Breast epithelium (tissue), 4 donors: ENCODE measurements at regions of chr3 and their contacts with region 1.

Region 1: DNA sequence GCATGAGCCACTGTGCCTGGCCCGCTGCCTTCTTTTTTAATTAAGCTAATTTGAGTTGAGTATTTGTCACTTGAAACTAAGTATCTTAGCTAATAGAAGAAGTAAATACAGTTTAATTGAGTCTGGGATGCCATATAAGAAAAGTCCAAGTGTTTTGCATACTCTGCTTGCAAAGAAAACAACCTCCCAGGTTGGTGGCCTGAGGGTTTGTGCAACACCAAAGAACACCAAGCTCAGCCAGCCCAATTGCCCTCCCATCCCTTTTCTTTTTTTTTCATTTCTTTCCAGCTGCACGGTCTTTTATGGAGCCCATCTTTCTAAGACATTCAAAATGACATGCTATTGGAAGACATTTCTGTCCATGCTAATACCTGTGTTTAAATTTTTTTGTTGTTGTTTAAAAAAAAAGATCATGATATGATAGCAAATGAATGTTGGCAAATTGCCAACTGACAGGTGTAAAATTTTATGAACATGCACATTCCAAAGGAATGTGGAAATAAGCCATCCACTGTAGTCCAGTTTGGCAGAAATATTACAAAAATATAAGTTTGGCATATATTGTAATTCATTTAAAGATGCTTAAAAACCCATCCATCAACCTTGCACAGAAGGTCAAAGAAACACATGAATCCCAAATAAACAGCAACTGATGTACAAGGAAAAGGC is 75.5 kb upstream of the WNT5A start:
- DNase-seq: no peak
- H3K4me3 ChIP-seq: no peak overlapping the region
- H3K27ac ChIP-seq: no peak overlapping the region
- H3K4me1 ChIP-seq: no peaks in the 10 kb centered on the region
- H3K27me3 ChIP-seq: no peaks in the 10 kb centered on the region
- CTCF ChIP-seq: no peak
- POLR2A ChIP-seq: no peak

Region 2: GRCh38 chr3:55487381-55488241 is 75.0 kb before region 1 on chr3:
- intact Hi-C with region 1: loop called (anchors 2 kb)
- DNase-seq: peak in 1 of 2 donors; percentile 49
- H3K4me3 ChIP-seq: peak overlapping the region; percentile 51 to 91 (median 81)
- H3K27ac ChIP-seq: peak overlapping the region; percentile 83 to 84
- H3K4me1 ChIP-seq: no peaks in the 10 kb centered on the region
- H3K27me3 ChIP-seq: no peaks in the 10 kb centered on the region
- CTCF ChIP-seq: no peak
- POLR2A ChIP-seq: no peak

Region 3: DNA sequence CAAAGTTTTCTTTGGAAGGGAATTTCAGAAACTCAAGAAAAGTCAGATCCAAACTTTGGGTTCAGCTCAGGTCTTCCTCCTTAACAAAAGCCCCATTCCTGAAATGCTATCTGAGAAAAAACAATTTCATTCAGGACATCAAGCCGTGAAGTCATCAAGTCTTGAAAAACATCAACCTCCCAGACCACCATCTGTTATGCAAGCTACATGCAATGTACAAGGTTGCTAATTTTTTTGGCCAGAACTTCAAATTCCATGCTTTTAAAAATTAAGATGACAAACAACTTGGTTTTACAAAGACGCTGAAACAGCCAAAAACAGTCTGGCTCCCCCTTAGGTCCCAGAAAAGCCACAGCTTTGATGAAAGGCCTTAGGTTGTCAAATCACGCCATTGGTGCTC is 21.5 kb before region 1 on chr3:
- intact Hi-C with region 1: loop called (anchors 1 kb)
- DNase-seq: no peak
- H3K4me3 ChIP-seq: no peak overlapping the region
- H3K27ac ChIP-seq: no peak overlapping the region
- H3K4me1 ChIP-seq: no peaks in the 10 kb centered on the region
- H3K27me3 ChIP-seq: no peaks in the 10 kb centered on the region
- CTCF ChIP-seq: no peak
- POLR2A ChIP-seq: no peak

Region 4: GRCh38 chr3:55675478-55675877 is 112.9 kb after region 1 on chr3:
- intact Hi-C with region 1: no loop called
- DNase-seq: no peak
- H3K4me3 ChIP-seq: no peak overlapping the region
- H3K27ac ChIP-seq: no peak overlapping the region
- H3K4me1 ChIP-seq: no peaks in the 10 kb centered on the region
- H3K27me3 ChIP-seq: no peaks in the 10 kb centered on the region
- CTCF ChIP-seq: no peak
- POLR2A ChIP-seq: no peak